Activated T-helper 2 cell treated with anti-CD3 and anti-CD28 coated beads, Interferon-gamma antibody, Interleukin-2, Interleukin-4, amounts not matched to agents 10 μg/mL and 5 μg/mL and 100 μg/mL, durations not matched to agents 14 hours and 24 hours and 36 hours (primary cell): ENCODE measurements at regions of chr15 and their contacts with region 1.

Region 1: GRCh38 chr15:25508369-25509002 is 69.7 kb upstream of the UBE3A start:
- DNase-seq: no peak
- H3K4me3 Mint-ChIP-seq: no peak overlapping the region
- H3K27ac Mint-ChIP-seq: no peak overlapping the region
- H3K4me1 Mint-ChIP-seq: no peaks in the 10 kb centered on the region
- H3K27me3 Mint-ChIP-seq: no peaks in the 10 kb centered on the region

Region 2: GRCh38 chr15:25635191-25635590 is 126.7 kb after region 1 on chr15:
- intact Hi-C with region 1: no loop called
- DNase-seq: no peak
- H3K4me3 Mint-ChIP-seq: no peak overlapping the region
- H3K27ac Mint-ChIP-seq: no peak overlapping the region
- H3K4me1 Mint-ChIP-seq: no peaks in the 10 kb centered on the region
- H3K27me3 Mint-ChIP-seq: peaks cover under 1% of the 10 kb centered on the region

Region 3: GRCh38 chr15:26260517-26261133 is 752.1 kb after region 1 on chr15:
- intact Hi-C with region 1: loop called (anchors 10 kb)
- DNase-seq: no peak
- H3K4me3 Mint-ChIP-seq: no peak overlapping the region
- H3K27ac Mint-ChIP-seq: no peak overlapping the region
- H3K4me1 Mint-ChIP-seq: no peaks in the 10 kb centered on the region
- H3K27me3 Mint-ChIP-seq: no peaks in the 10 kb centered on the region